ENCODE measurements at regions of chr1 and their contacts with region 1.

Region 1: GRCh38 chr1:198157241-198157846 is 546 bp downstream of the NEK7 start:
- DNase-seq: peak; percentile 98
- H3K4me3 Mint-ChIP-seq: peak overlapping the region; percentile 85
- H3K27ac Mint-ChIP-seq: peak overlapping the region; percentile 86
- H3K4me1 Mint-ChIP-seq: peaks cover 42% of the 10 kb centered on the region
- H3K27me3 Mint-ChIP-seq: no peaks in the 10 kb centered on the region
- CTCF ChIP-seq: no peak

Region 2: DNA sequence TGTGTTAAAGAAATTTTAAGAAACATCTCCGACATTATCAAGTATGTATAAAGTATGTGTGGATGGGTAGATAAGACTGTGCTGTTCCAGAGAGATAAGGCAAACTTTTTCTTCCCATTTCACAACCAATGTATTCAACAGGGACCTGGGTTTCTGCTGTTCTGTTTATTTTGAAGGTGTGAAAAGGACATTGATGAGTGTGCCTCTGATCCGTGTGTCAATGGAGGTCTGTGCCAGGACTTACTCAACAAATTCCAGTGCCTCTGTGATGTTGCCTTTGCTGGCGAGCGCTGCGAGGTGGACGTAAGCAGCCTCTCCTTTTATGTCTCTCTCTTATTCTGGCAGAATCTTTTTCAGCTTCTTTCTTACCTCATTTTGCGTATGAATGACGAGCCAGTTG is 715.4 kb before region 1 on chr1:
- CTCF ChIA-PET with region 1: no interaction called
- POLR2A ChIA-PET with region 1: no interaction called
- intact Hi-C with region 1: no loop called
- DNase-seq: peak; percentile 75
- H3K4me3 Mint-ChIP-seq: no peak overlapping the region
- H3K27ac Mint-ChIP-seq: peak overlapping the region; percentile 0
- H3K4me1 Mint-ChIP-seq: peaks cover 18% of the 10 kb centered on the region
- H3K27me3 Mint-ChIP-seq: no peaks in the 10 kb centered on the region
- CTCF ChIP-seq: no peak

Region 3: DNA sequence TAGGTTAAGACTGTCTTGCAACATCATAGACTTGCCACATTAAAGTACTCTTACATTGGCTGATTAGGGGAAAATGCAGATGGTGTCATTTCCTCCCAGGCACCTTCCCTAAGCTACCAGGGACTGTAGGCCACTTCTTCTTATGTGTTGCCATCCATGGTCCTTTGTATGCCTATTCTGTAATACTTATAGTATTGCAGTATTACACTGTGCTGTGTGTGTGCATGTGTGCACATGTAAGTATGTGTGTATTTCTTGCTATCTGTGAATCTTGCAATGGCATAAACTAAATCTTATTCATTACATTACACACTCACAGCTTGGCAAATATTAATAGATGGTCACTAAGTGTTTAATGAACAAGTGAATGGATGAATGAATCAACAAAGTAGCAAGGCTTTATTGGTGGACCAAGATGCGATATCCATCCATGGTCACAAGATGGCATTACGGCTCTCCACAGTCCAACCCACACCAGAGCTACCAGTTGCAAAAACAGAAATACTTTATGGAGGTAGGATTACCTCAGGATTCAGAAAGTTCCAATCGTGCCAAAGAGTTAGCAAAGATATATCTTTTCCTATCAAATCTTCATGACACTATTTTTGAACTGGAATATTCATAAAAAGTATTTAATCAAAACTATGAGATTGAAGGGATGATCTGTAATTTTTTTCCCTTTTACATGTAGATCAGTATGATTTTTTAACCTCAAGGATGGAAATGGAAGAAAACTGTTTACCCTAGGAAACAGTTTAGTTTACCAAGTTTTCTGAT is 542.2 kb before region 1 on chr1:
- CTCF ChIA-PET with region 1: interaction called, 7 read pairs
- POLR2A ChIA-PET with region 1: interaction called, 4 read pairs
- intact Hi-C with region 1: loop called (anchors 2 kb)
- DNase-seq: peak; percentile 67
- H3K4me3 Mint-ChIP-seq: no peak overlapping the region
- H3K27ac Mint-ChIP-seq: no peak overlapping the region
- H3K4me1 Mint-ChIP-seq: no peaks in the 10 kb centered on the region
- H3K27me3 Mint-ChIP-seq: no peaks in the 10 kb centered on the region
- CTCF ChIP-seq: peak; percentile 82

Region 4: GRCh38 chr1:197924516-197925123 is 232.7 kb before region 1 on chr1:
- CTCF ChIA-PET with region 1: interaction called, 15 read pairs
- POLR2A ChIA-PET with region 1: interaction called, 3 read pairs
- intact Hi-C with region 1: loop called (anchors 5 kb)
- DNase-seq: peak; percentile 84
- H3K4me3 Mint-ChIP-seq: no peak overlapping the region
- H3K27ac Mint-ChIP-seq: no peak overlapping the region
- H3K4me1 Mint-ChIP-seq: peaks cover 5% of the 10 kb centered on the region
- H3K27me3 Mint-ChIP-seq: no peaks in the 10 kb centered on the region
- CTCF ChIP-seq: peak; percentile 84

Region 5: DNA sequence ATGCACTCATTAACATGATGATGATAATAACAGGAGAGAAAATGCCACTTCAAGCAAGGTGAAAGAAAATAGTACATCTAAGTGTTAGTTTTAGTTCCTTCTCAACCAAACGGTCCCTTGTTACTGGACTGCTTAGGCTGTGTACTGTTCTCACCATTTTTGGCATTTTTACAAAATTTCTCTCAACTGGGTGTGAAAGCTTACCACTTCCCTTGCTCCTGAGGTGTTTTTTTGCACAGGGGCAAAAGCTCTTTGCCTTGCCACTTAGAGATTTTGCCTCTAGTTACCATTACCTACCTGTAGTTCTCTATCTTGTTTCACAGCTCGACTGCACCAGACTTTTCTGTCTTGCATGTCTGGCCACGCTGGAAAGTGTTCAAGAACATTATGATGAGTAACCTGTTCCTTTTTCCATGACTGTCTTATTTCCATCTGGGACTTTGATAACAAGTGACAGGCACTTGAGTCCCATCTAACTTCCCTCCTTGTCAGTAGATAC is 10.1 kb after region 1 on chr1:
- CTCF ChIA-PET with region 1: interaction called, 11 read pairs
- POLR2A ChIA-PET with region 1: interaction called, 159 read pairs
- intact Hi-C with region 1: no loop called
- DNase-seq: peak; percentile 78
- H3K4me3 Mint-ChIP-seq: peak overlapping the region; percentile 5
- H3K27ac Mint-ChIP-seq: peak overlapping the region; percentile 63
- H3K4me1 Mint-ChIP-seq: peaks cover 42% of the 10 kb centered on the region
- H3K27me3 Mint-ChIP-seq: no peaks in the 10 kb centered on the region
- CTCF ChIP-seq: no peak

Region 6: GRCh38 chr1:198234520-198235251 is 77.3 kb after region 1 on chr1:
- CTCF ChIA-PET with region 1: interaction called, 4 read pairs
- POLR2A ChIA-PET with region 1: interaction called, 83 read pairs
- intact Hi-C with region 1: no loop called
- DNase-seq: peak; percentile 62
- H3K4me3 Mint-ChIP-seq: peak overlapping the region; percentile 70
- H3K27ac Mint-ChIP-seq: no peak overlapping the region
- H3K4me1 Mint-ChIP-seq: peaks cover 29% of the 10 kb centered on the region
- H3K27me3 Mint-ChIP-seq: no peaks in the 10 kb centered on the region
- CTCF ChIP-seq: no peak

Region 7: GRCh38 chr1:198359024-198359653 is 201.8 kb after region 1 on chr1:
- CTCF ChIA-PET with region 1: interaction called, 3 read pairs
- POLR2A ChIA-PET with region 1: no interaction called
- intact Hi-C with region 1: loop called (anchors 2 kb)
- DNase-seq: peak; percentile 62
- H3K4me3 Mint-ChIP-seq: no peak overlapping the region
- H3K27ac Mint-ChIP-seq: no peak overlapping the region
- H3K4me1 Mint-ChIP-seq: peaks cover 10% of the 10 kb centered on the region
- H3K27me3 Mint-ChIP-seq: no peaks in the 10 kb centered on the region
- CTCF ChIP-seq: peak; percentile 75

Region 8: DNA sequence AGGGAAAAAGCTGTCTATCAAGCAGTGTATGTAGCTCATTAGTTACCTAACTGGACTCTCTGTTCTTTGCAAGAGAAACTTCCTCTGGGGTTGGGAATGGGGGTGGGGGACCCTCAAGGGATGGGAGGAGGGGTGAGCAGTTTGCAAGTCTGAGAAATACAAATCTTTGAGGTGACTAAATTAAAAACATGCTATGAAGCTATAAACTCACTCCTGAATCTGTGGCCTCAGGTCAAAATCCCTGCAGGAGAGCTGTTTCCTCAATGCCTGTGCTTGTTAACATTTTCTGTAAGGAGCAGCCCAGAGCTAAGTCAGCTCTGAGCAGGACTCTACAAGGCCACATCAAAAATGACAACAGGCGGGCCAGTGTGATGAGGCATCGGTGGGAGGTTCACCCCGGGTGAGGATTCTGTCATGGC is 448.7 kb after region 1 on chr1:
- CTCF ChIA-PET with region 1: no interaction called
- POLR2A ChIA-PET with region 1: no interaction called
- intact Hi-C with region 1: no loop called
- DNase-seq: no peak
- H3K4me3 Mint-ChIP-seq: no peak overlapping the region
- H3K27ac Mint-ChIP-seq: peak overlapping the region; percentile 9
- H3K4me1 Mint-ChIP-seq: peaks cover 6% of the 10 kb centered on the region
- H3K27me3 Mint-ChIP-seq: no peaks in the 10 kb centered on the region
- CTCF ChIP-seq: no peak

Region 9: GRCh38 chr1:198681831-198682759 is 524.8 kb after region 1 on chr1:
- CTCF ChIA-PET with region 1: interaction called, 5 read pairs
- POLR2A ChIA-PET with region 1: interaction called, 27 read pairs
- intact Hi-C with region 1: loop called (anchors 2 kb)
- DNase-seq: peak; percentile 94
- H3K4me3 Mint-ChIP-seq: peak overlapping the region; percentile 67
- H3K27ac Mint-ChIP-seq: peak overlapping the region; percentile 96
- H3K4me1 Mint-ChIP-seq: peaks cover 25% of the 10 kb centered on the region
- H3K27me3 Mint-ChIP-seq: no peaks in the 10 kb centered on the region
- CTCF ChIP-seq: no peak

Measured in MCF 10A (cell line).